Activated CD4-positive, alpha-beta T cell treated with anti-CD3 and anti-CD28 coated beads for 36 hours (primary cell): ENCODE measurements at regions of chr20 and their contacts with region 1.

Region 1: GRCh38 chr20:49685809-49686208 is 27.9 kb downstream of the B4GALT5 start:
- DNase-seq: no peak
- ATAC-seq: no peak
- H3K4me3 Mint-ChIP-seq: no peak overlapping the region
- H3K27ac Mint-ChIP-seq: no peak overlapping the region
- H3K4me1 Mint-ChIP-seq: peaks cover 26% of the 10 kb centered on the region
- H3K27me3 Mint-ChIP-seq: no peaks in the 10 kb centered on the region

Region 2: GRCh38 chr20:49758781-49759180 is 73.0 kb after region 1 on chr20:
- CTCF ChIA-PET with region 1: no interaction called
- POLR2A ChIA-PET with region 1: interaction called, 11 read pairs
- intact Hi-C with region 1: no loop called
- DNase-seq: no peak
- ATAC-seq: no peak
- H3K4me3 Mint-ChIP-seq: no peak overlapping the region
- H3K27ac Mint-ChIP-seq: no peak overlapping the region
- H3K4me1 Mint-ChIP-seq: no peaks in the 10 kb centered on the region
- H3K27me3 Mint-ChIP-seq: peaks cover 39% of the 10 kb centered on the region

Region 3: GRCh38 chr20:49989234-49990065 is 303.6 kb after region 1 on chr20:
- CTCF ChIA-PET with region 1: no interaction called
- POLR2A ChIA-PET with region 1: no interaction called
- intact Hi-C with region 1: no loop called
- DNase-seq: peak; percentile 19
- ATAC-seq: peak; percentile 44
- H3K4me3 Mint-ChIP-seq: no peak overlapping the region
- H3K27ac Mint-ChIP-seq: no peak overlapping the region
- H3K4me1 Mint-ChIP-seq: no peaks in the 10 kb centered on the region
- H3K27me3 Mint-ChIP-seq: no peaks in the 10 kb centered on the region